Colonic mucosa (tissue), 4 donors: ENCODE measurements at regions of chr9 and their contacts with region 1.

Region 1: GRCh38 chr9:130701056-130702022 is 7.8 kb downstream of the EXOSC2 start:
- DNase-seq: peak; percentile 82
- H3K4me3 ChIP-seq: no peak overlapping the region
- H3K27ac ChIP-seq: no peak overlapping the region
- H3K4me1 ChIP-seq: no peaks in the 10 kb centered on the region
- H3K27me3 ChIP-seq: no peaks in the 10 kb centered on the region
- CTCF ChIP-seq: peak; percentile 97

Region 2: GRCh38 chr9:130860458-130861316 is 159.3 kb after region 1 on chr9:
- intact Hi-C with region 1: loop called (anchors 2 kb)
- DNase-seq: peak; percentile 38
- H3K4me3 ChIP-seq: no peak overlapping the region
- H3K27ac ChIP-seq: peak overlapping the region; percentile 40
- H3K4me1 ChIP-seq: no peaks in the 10 kb centered on the region
- H3K27me3 ChIP-seq: no peaks in the 10 kb centered on the region
- CTCF ChIP-seq: no peak

Region 3: DNA sequence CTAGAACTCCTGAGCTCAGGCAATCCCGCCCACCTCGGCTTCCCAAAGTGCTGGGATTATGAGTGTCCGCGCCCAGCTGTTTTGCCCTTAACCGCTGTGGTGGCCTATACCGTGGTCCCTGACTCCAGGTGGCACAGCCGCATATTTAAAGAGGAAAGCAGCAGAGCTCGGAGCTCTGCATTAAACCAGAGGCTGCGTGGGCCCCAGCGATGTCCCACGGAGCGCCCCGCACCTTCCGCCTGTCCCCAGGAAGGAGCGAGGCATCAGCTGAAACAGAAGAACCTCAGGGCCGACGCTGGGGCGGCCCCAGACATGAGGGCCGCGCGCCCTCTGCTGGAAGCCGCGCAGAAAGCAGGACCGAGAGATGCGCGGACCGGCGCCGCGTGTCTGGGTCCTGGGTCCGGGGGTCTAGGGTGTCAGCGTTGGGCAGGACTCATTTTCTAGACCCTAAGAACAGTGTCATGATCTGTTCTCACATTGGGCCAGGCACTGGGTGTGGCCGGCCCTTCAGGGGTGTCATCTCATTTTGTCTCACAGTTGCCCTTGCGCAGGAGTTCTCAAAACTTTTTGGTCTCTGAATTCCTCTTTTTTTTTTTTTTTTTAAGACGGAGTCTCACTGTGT is 345.4 kb after region 1 on chr9:
- intact Hi-C with region 1: loop called (anchors 5 kb)
- DNase-seq: peak; percentile 73
- H3K4me3 ChIP-seq: no peak overlapping the region
- H3K27ac ChIP-seq: no peak overlapping the region
- H3K4me1 ChIP-seq: no peaks in the 10 kb centered on the region
- H3K27me3 ChIP-seq: no peaks in the 10 kb centered on the region
- CTCF ChIP-seq: peak; percentile 90